HEK293 (cell line): ENCODE measurements at regions of chr11 and their contacts with region 1.

Region 1: GRCh38 chr11:27497284-27497866 is 9.2 kb downstream of the LIN7C start:
- H3K4me3 ChIP-seq: no peak overlapping the region
- H3K27ac ChIP-seq: no peak overlapping the region
- H3K4me1 ChIP-seq: no peaks in the 10 kb centered on the region
- CTCF ChIP-seq: no peak

Region 2: DNA sequence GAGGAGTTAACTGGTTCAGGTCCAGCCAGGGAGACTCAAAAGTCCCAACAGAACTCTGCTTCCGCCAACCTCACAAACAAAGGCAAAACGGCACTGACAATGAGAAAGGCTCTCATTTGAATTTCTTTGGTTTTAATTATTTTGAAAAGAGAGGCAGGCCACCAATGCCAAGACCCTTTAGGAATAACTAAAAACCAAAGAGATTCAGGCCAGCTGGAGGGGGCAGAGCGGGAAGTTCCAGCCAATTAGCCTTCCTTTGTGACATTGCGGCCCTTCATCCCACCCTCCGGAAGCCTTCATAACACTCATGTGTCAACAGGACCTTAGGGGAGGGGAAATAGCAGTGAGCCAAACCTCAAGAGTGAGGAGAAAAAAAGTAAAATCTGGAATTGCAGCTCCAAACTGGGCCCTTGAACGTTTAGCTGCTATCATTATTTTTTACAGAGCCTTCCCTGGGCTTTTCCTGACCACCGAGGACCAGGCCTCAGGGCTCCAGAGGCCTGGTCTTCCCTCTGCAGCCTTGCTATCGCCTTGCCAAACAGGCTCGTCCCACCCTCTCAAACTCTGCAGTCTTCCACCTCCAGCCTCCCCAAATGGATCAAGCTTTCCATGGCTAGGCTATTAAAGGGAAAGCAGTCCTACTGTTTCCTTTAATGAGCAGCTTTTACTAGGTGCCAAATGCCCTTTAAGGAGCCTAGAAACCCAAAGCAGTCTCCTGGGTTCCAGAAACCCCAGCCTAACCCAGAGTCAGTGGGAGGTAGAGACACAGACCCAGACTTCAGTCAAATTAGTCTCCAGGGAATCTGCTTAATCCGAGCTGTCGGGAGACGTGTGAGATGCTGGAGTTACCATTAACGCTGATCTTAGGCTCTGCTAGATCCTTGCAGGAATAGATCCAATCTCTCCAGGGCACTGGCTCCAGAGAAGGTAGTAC is 248.5 kb before region 1 on chr11:
- CTCF ChIA-PET with region 1: no interaction called
- POLR2A ChIA-PET with region 1: no interaction called
- H3K4me3 ChIP-seq: no peak overlapping the region
- H3K27ac ChIP-seq: no peak overlapping the region
- H3K4me1 ChIP-seq: no peaks in the 10 kb centered on the region
- CTCF ChIP-seq: no peak

Region 3: DNA sequence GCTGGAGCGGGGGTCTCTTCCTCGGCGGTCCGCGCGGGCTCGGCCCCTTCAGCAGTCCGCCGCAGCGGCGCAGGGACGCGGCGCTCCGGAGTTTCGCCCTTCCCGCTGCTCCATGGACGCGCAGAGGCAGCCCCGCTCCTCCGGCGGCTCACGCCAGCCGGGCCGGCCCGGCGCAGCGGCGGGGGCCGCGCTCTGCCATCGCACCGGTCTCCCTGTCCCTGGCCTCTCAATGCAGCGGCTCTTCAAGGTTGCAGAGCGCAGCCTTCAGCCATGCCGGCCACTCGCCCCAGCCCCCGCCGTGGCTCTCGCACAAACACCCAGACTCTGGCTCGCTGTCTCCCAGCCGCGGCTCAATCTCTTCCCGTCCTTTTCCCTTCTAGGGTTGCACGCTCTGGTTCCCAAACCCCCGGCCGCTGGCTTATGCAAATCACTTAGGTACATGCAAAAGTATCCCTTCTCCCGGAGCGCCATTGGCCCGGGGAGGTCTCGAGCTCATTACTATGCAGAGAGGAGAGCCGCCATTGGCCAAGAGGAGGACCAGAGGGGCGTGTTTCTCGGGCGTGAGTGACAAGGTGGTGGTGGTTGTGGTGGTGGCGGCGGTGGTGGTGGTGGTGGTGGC is 24.9 kb before region 1 on chr11 and contains the start of gene LGR4:
- CTCF ChIA-PET with region 1: interaction called, 21 read pairs
- POLR2A ChIA-PET with region 1: interaction called, 4 read pairs
- H3K4me3 ChIP-seq: peak within 1 kb of the TSS; percentile 79
- H3K27ac ChIP-seq: peak within 1 kb of the TSS; percentile 93
- H3K4me1 ChIP-seq: no peaks in the 10 kb centered on the region
- CTCF ChIP-seq: no peak